GM12878 (cell line): ENCODE measurements at regions of chr1 and their contacts with region 1.

Region 1: GRCh38 chr1:180881806-180882509 is 30.7 kb upstream of the KIAA1614 start:
- DNase-seq: no peak
- ATAC-seq: peak; percentile 92
- H3K4me3 ChIP-seq: no peak overlapping the region
- H3K27ac ChIP-seq: no peak overlapping the region
- H3K4me1 ChIP-seq: no peaks in the 10 kb centered on the region
- H3K27me3 ChIP-seq: no peaks in the 10 kb centered on the region
- CTCF ChIP-seq: peak; percentile 38 to 66 (median 49); a peak in 5 of 6 replicates
- EP300 ChIP-seq: no peak
- POLR2A ChIP-seq: no peak
- RAD21 ChIP-seq: peak; percentile 80

Region 2: GRCh38 chr1:180898441-180899219 is 16.7 kb after region 1 on chr1:
- CTCF ChIA-PET with region 1: interaction called, 10 read pairs
- POLR2A ChIA-PET with region 1: no interaction called
- RAD21 ChIA-PET with region 1: interaction called, 4 read pairs
- SMC1A ChIA-PET with region 1: interaction called, 8 read pairs
- in situ Hi-C with region 1: no loop called
- intact Hi-C with region 1: no loop called
- DNase-seq: no peak
- ATAC-seq: no peak
- H3K4me3 ChIP-seq: no peak overlapping the region
- H3K27ac ChIP-seq: no peak overlapping the region
- H3K4me1 ChIP-seq: no peaks in the 10 kb centered on the region
- H3K27me3 ChIP-seq: no peaks in the 10 kb centered on the region
- CTCF ChIP-seq: no peak
- EP300 ChIP-seq: no peak
- POLR2A ChIP-seq: no peak
- RAD21 ChIP-seq: no peak

Region 3: DNA sequence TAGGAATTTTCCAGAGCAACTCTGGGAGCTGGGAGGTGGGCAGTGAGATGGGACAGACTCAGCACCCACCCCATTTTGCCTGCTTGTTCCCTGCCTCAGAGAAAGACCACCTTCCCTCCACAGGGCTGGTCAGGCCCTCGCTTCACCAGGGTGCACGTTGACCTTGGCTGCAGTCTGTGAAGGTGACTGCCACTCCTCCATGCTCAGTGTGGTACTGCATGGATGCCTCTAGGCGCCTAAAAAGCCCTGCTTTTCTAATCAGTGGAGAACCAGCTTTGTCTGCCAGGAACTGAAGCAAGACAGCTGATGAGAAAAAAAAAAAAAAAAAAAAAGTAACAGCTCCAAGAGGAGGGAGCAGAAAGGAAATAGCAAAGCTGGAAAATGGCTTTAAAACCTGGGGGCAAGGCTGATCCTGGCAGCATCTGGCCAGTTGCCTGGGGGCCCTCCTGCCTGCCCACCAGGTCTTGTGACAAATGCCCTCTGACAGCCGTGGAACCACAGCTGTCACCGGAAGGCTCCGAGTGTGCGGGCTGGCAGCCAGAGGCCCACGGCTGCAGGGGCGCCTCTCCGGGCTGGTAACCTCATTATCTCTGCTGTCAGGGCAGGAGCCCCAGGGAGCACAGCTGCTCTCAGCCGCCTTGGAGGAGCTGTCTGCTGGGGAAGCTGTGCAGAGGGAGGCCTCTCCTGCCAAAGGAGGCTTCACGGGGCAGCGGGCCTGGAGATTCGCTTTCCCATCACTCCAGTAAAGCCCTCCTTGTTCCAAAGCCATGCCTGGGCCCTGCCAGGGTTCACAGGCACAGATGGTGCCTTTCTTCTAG is 44.4 kb after region 1 on chr1:
- CTCF ChIA-PET with region 1: interaction called, 344 read pairs
- POLR2A ChIA-PET with region 1: no interaction called
- RAD21 ChIA-PET with region 1: interaction called, 215 read pairs
- SMC1A ChIA-PET with region 1: interaction called, 304 read pairs
- in situ Hi-C with region 1: no loop called
- intact Hi-C with region 1: no loop called
- DNase-seq: no peak
- ATAC-seq: peak; percentile 32
- H3K4me3 ChIP-seq: no peak overlapping the region
- H3K27ac ChIP-seq: no peak overlapping the region
- H3K4me1 ChIP-seq: peaks cover 5% of the 10 kb centered on the region; the same call in 1 of the 2 replicates
- H3K27me3 ChIP-seq: peaks cover 0 to 3% of the 10 kb centered on the region in 2 experiments; a peak in 1 of 4 replicates
- CTCF ChIP-seq: no peak
- EP300 ChIP-seq: no peak
- POLR2A ChIP-seq: no peak
- RAD21 ChIP-seq: no peak

Region 4: DNA sequence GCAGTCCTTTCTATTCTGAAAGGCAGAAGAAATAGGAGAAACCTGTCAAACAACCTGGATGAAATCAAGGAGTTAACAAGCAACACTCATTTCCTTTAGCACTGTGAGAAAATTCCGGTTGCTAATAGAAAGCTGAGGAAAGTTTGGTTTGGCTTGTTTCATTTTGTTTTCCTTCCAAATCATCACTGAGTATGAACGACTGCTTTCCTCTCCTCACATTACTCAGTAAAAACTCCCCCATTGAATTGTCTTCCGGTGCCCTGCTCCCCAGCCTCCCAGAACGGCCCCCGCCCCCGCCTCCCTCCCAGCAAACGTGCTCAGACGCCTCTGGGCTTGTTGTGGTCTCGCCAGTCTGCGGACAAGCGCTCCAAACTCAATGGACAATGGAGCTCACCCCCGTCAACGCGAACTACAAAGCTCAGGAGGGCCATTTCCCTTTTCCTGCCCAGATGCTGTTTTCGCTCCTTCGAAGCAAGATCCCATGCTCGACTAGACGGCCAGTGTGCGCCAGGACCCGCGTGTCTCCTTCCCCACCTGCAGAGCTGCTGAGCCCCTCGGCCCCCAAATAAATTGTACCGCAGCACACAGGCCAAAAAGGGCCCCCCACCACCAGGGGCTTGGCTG is 140.0 kb after region 1 on chr1:
- CTCF ChIA-PET with region 1: interaction called, 4 read pairs
- POLR2A ChIA-PET with region 1: no interaction called
- RAD21 ChIA-PET with region 1: interaction called, 10 read pairs
- SMC1A ChIA-PET with region 1: interaction called, 7 read pairs
- in situ Hi-C with region 1: no loop called
- intact Hi-C with region 1: loop called (anchors 2 kb)
- DNase-seq: no peak
- ATAC-seq: peak; percentile 76
- H3K4me3 ChIP-seq: peak overlapping the region; percentile 90
- H3K27ac ChIP-seq: peak overlapping the region; percentile 89
- H3K4me1 ChIP-seq: peaks cover 12% of the 10 kb centered on the region
- H3K27me3 ChIP-seq: no peaks in the 10 kb centered on the region
- CTCF ChIP-seq: no peak
- EP300 ChIP-seq: no peak
- POLR2A ChIP-seq: no peak
- RAD21 ChIP-seq: no peak

Region 5: DNA sequence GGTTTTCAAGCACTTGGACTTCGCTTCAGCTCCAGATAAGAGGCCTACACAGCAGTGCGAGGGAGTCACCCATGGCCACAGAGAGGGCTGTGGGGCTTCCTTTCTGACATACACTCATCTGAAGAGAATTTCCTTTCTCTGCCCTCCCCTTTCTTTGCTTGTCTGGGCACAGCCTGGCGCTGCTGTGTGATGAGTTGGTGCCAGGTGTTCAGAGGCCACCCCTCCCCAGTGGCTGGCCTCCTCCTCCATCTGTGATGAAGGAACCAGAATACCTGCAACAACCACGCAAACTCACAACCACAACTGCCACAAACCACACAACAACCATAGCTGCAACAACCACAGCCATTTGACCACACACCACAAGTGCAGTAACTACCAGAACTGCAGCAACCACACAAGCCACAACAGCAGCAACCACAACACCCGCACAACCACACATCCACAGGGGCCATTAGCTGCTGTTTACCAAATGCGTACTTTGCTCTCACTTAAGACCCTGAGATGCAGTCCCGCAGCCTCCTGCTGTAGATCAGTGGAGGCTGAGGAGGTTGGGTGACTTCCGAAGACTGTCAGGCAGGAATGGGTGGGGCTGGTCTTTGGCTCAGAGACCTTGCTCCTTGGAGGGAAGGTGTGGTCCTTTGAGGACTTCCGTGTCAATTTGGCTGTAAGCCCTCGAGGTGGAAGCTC is 277.6 kb after region 1 on chr1:
- CTCF ChIA-PET with region 1: interaction called, 59 read pairs
- POLR2A ChIA-PET with region 1: no interaction called
- RAD21 ChIA-PET with region 1: interaction called, 19 read pairs
- SMC1A ChIA-PET with region 1: interaction called, 10 read pairs
- in situ Hi-C with region 1: no loop called
- intact Hi-C with region 1: no loop called
- DNase-seq: no peak
- ATAC-seq: peak; percentile 74
- H3K4me3 ChIP-seq: no peak overlapping the region
- H3K27ac ChIP-seq: no peak overlapping the region
- H3K4me1 ChIP-seq: peaks cover 10% of the 10 kb centered on the region
- H3K27me3 ChIP-seq: no peaks in the 10 kb centered on the region
- CTCF ChIP-seq: no peak
- EP300 ChIP-seq: peak in 1 of 2 experiments; percentile 25; a peak in 1 of 4 replicates
- POLR2A ChIP-seq: no peak
- RAD21 ChIP-seq: no peak